MCF 10A (cell line): ENCODE measurements at regions of chr19 and their contacts with region 1.

Region 1: DNA sequence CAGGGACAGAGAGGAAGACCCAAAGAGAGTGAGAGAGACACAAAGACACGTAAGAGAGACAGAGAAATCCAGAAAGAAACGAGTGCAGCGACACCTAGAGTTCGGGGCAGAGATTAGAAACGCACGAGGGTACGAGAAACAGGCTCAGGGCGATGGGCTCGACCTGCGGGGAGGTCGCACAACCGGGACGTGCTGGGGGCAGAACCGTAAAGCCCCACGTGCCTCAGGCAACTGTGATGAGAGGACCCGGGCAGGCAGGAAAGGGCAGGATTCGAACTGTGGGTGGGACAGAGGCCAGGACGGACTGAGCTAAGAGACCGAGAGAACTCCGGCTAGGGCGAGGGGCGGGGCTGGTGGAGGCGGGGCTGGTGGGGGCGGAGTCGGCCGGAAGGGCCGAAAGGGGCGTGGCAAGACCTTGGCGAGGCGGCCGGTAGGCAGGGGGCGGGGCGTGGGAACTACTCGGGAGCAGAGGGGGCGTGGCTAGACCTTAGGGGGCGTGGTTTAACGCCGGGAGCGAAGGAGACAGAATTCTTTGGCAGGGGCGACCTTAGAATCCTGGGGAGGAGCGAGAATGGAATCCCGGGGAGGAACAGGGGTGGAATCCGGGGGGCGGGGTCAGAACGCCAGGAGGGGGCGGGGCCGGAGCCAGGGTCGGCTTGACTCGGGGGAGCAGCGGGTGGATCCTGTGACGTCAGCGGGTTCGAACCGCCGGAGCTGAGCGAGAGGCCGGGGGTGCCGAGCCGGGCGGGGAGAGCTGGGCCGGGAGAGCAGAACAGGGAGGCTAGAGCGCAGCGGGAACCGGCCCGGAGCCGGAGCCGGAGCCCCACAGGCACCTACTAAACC is at the start of gene NECTIN2:
- DNase-seq: peak; percentile 99
- H3K4me3 Mint-ChIP-seq: peak within 1 kb of the TSS; percentile 84
- H3K27ac Mint-ChIP-seq: peak within 1 kb of the TSS; percentile 95
- H3K4me1 Mint-ChIP-seq: peaks cover 27% of the 10 kb centered on the region
- H3K27me3 Mint-ChIP-seq: no peaks in the 10 kb centered on the region
- CTCF ChIP-seq: peak; percentile 82
- total RNA-seq, gene NECTIN2: 46.5 and 56.7 TPM in 2 replicates

Region 2: DNA sequence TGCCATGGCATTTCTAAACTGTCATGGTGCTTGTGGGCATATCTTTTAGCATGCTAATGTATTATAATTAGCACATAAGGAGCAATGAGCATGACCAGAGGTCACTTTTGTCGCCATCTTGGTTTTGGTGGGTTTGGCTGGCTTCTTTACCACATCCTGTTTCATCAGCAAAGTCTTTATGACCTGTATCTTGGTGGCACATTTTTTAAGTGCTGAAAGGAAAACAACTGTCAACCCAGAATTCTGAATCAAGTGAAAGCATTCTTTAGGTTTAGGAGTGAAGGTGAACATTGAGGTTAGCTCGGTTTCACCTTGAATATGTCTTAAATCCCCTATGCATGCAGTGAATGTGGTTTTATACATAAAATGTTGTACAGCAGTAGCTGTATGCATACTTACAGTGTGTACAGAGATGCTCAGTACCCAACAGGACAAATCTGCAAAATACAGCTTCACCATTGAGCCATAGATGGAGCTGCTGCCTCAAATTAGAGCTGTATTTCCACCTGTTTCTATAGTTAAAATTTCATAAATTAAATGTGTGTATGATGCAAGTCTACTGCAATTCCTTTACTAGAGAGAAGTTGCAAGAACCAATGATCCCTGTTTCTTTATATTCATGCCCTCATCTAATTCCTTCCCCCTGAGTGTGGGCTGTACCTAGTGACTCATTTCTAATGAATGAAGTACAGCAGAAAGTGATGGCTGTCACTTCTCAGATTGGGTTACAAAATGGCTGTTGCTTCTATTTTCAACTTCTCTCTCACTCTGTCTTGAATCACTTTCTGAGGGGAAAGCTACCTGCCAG is 257.7 kb before region 1 on chr19:
- CTCF ChIA-PET with region 1: interaction called, 4 read pairs
- POLR2A ChIA-PET with region 1: no interaction called
- intact Hi-C with region 1: loop called (anchors 1 kb)
- DNase-seq: peak; percentile 88
- H3K4me3 Mint-ChIP-seq: peak overlapping the region; percentile 21
- H3K27ac Mint-ChIP-seq: peak overlapping the region; percentile 99
- H3K4me1 Mint-ChIP-seq: peaks cover 25% of the 10 kb centered on the region
- H3K27me3 Mint-ChIP-seq: no peaks in the 10 kb centered on the region
- CTCF ChIP-seq: peak; percentile 52

Region 3: GRCh38 chr19:44607049-44607448 is 238.8 kb before region 1 on chr19:
- CTCF ChIA-PET with region 1: no interaction called
- POLR2A ChIA-PET with region 1: no interaction called
- intact Hi-C with region 1: no loop called
- DNase-seq: no peak
- H3K4me3 Mint-ChIP-seq: no peak overlapping the region
- H3K27ac Mint-ChIP-seq: no peak overlapping the region
- H3K4me1 Mint-ChIP-seq: peaks cover 11% of the 10 kb centered on the region
- H3K27me3 Mint-ChIP-seq: no peaks in the 10 kb centered on the region
- CTCF ChIP-seq: no peak

Region 4: DNA sequence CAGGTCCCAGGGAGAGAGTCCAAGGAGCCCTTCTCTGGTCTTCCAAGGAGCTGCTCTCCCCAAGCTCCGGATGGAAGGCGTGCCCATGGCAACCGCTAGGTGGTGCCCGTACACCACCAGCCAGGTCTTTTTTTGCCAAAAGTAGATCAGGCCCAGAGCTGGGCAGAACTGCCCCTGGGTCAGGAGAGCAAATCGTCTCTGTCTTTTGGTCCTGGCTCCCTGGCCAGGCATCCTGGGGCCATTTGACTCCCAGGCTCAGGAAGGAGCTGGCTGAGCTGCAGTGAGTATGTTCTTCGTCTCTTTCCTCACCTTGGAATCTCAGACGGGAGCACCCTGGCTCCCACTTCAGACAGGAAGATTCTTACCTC is 121.9 kb before region 1 on chr19:
- CTCF ChIA-PET with region 1: interaction called, 9 read pairs
- POLR2A ChIA-PET with region 1: no interaction called
- intact Hi-C with region 1: loop called (anchors 1 kb)
- DNase-seq: peak; percentile 90
- H3K4me3 Mint-ChIP-seq: no peak overlapping the region
- H3K27ac Mint-ChIP-seq: no peak overlapping the region
- H3K4me1 Mint-ChIP-seq: peaks cover 10% of the 10 kb centered on the region
- H3K27me3 Mint-ChIP-seq: no peaks in the 10 kb centered on the region
- CTCF ChIP-seq: peak; percentile 97

Region 5: GRCh38 chr19:44776435-44777096 is 69.3 kb before region 1 on chr19:
- CTCF ChIA-PET with region 1: interaction called, 14 read pairs
- POLR2A ChIA-PET with region 1: interaction called, 3 read pairs
- intact Hi-C with region 1: no loop called
- DNase-seq: peak; percentile 86
- H3K4me3 Mint-ChIP-seq: peak overlapping the region; percentile 19
- H3K27ac Mint-ChIP-seq: peak overlapping the region; percentile 40
- H3K4me1 Mint-ChIP-seq: peaks cover 19% of the 10 kb centered on the region
- H3K27me3 Mint-ChIP-seq: no peaks in the 10 kb centered on the region
- CTCF ChIP-seq: no peak

Region 6: GRCh38 chr19:44800461-44800860 is 45.4 kb before region 1 on chr19:
- CTCF ChIA-PET with region 1: interaction called, 10 read pairs
- POLR2A ChIA-PET with region 1: interaction called, 3 read pairs
- intact Hi-C with region 1: loop called (anchors 2 kb)
- DNase-seq: peak; percentile 84
- H3K4me3 Mint-ChIP-seq: no peak overlapping the region
- H3K27ac Mint-ChIP-seq: no peak overlapping the region
- H3K4me1 Mint-ChIP-seq: no peaks in the 10 kb centered on the region
- H3K27me3 Mint-ChIP-seq: no peaks in the 10 kb centered on the region
- CTCF ChIP-seq: peak; percentile 95

Region 7: DNA sequence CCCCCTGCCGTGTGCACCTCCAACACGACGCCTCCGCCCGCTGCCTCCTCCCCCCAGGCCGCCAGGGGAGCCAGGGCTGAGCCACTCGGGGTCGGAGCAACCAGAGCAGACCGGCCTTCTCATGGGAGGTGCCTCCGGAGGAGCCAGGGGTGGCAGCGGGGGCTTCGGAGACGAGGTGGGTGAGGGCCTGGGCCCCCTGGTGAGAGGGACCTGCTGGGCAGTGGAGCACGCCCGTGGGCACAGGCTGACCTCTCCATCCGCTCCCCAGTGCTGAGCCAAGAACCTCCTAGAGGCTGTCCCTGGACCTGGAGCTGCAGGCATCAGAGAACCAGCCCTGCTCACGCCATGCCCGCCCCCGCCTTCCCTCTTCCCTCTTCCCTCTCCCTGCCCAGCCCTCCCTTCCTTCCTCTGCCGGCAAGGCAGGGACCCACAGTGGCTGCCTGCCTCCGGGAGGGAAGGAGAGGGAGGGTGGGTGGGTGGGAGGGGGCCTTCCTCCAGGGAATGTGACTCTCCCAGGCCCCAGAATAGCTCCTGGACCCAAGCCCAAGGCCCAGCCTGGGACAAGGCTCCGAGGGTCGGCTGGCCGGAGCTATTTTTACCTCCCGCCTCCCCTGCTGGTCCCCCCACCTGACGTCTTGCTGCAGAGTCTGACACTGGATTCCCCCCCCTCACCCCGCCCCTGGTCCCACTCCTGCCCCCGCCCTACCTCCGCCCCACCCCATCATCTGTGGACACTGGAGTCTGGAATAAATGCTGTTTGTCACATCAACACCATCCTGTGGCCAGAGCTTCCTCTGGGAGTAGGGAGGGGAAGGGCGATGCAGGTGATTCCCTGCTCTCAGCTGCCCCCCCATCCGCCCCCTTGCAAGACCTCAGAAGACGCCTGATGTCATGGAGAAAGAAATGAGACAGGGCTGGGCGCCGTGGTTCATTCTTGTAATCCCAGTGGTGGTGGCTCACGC is 24.9 kb before region 1 on chr19:
- CTCF ChIA-PET with region 1: interaction called, 10 read pairs
- POLR2A ChIA-PET with region 1: no interaction called
- intact Hi-C with region 1: no loop called
- DNase-seq: no peak
- H3K4me3 Mint-ChIP-seq: no peak overlapping the region
- H3K27ac Mint-ChIP-seq: no peak overlapping the region
- H3K4me1 Mint-ChIP-seq: peaks cover 5% of the 10 kb centered on the region
- H3K27me3 Mint-ChIP-seq: peaks cover 20% of the 10 kb centered on the region
- CTCF ChIP-seq: no peak

Region 8: DNA sequence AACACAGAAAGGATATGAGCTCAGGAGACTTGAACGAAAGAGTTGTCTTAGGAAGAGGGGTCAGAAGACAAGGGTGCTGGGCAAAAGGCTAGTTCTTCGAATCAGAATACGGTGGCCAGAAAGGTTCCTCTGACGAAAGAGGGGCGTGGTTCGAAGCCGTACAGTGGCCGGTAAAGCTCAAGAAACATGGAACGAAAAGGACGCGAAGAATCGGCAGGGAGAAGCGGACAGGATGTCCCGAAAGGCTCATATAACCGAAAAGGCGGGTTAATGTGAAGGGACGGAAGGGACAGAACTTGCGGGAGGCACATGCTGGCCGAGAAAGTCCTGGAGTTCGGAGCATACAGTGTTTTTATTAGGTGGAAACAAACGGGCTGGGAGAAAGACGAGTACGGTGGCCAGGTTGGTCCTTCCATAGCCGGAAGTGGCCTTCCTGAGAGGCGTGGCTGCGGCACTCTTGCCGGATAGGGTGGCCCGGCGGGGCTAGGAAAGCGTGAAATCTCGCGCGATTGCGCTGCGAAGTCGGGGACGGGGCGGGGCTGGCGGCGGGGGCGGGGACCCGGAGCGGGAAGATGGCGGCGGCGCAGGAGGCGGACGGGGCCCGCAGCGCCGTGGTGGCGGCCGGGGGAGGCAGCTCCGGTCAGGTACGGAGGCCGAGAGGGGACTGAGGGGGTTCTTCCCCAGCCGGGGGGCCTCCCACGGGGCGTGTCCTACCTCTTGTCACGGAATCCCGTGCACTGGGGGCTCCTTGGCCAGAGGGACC is 109.2 kb after region 1 on chr19 and contains the start of gene CLPTM1:
- CTCF ChIA-PET with region 1: interaction called, 6 read pairs
- POLR2A ChIA-PET with region 1: interaction called, 3 read pairs
- intact Hi-C with region 1: loop called (anchors 5 kb)
- DNase-seq: peak; percentile 97
- H3K4me3 Mint-ChIP-seq: peak within 1 kb of the TSS; percentile 89
- H3K27ac Mint-ChIP-seq: peak within 1 kb of the TSS; percentile 96
- H3K4me1 Mint-ChIP-seq: peaks cover 29% of the 10 kb centered on the region
- H3K27me3 Mint-ChIP-seq: no peaks in the 10 kb centered on the region
- CTCF ChIP-seq: no peak
- total RNA-seq, gene CLPTM1: 91.3 and 101 TPM in 2 replicates